Activated CD4-positive, alpha-beta memory T cell treated with anti-CD3 and anti-CD28 coated beads for 36 hours (primary cell): ENCODE measurements at regions of chr9 and their contacts with region 1.

Region 1: GRCh38 chr9:109935406-109936087 is 155.5 kb downstream of the PALM2AKAP2 start:
- DNase-seq: no peak
- H3K4me3 Mint-ChIP-seq: no peak overlapping the region
- H3K27ac Mint-ChIP-seq: peak overlapping the region; percentile 81
- H3K4me1 Mint-ChIP-seq: peaks cover 31% of the 10 kb centered on the region
- H3K27me3 Mint-ChIP-seq: peaks cover 5% of the 10 kb centered on the region

Region 2: DNA sequence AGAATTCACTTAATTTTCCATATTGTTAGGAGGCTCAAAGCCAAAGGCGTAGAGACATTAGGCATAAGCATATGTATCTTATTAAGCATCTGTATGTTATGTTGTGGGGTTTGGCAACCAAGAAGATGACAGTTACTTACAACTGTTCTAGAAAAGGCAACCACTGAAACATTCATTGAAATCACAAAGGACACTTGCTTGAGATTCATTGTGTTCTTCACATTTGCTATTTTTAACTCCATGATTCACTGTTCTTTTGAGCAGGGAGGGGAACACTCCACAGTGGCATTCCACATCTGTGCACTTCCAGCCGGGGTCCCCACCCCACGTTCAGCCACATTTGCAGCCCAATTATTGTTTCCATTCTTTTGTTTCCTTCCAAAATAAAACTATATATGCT is 48.5 kb before region 1 on chr9:
- CTCF ChIA-PET with region 1: no interaction called
- POLR2A ChIA-PET with region 1: interaction called, 3 read pairs
- intact Hi-C with region 1: loop called (anchors 2 kb)
- DNase-seq: no peak
- H3K4me3 Mint-ChIP-seq: no peak overlapping the region
- H3K27ac Mint-ChIP-seq: peak overlapping the region; percentile 84
- H3K4me1 Mint-ChIP-seq: peaks cover 50% of the 10 kb centered on the region
- H3K27me3 Mint-ChIP-seq: peaks cover 1% of the 10 kb centered on the region

Region 3: GRCh38 chr9:109918339-109919163 is 17.0 kb before region 1 on chr9:
- CTCF ChIA-PET with region 1: no interaction called
- POLR2A ChIA-PET with region 1: interaction called, 7 read pairs
- intact Hi-C with region 1: loop called (anchors 1 kb)
- DNase-seq: peak; percentile 75
- H3K4me3 Mint-ChIP-seq: peak overlapping the region; percentile 58
- H3K27ac Mint-ChIP-seq: peak overlapping the region; percentile 97
- H3K4me1 Mint-ChIP-seq: peaks cover 29% of the 10 kb centered on the region
- H3K27me3 Mint-ChIP-seq: peaks cover 1% of the 10 kb centered on the region

Region 4: DNA sequence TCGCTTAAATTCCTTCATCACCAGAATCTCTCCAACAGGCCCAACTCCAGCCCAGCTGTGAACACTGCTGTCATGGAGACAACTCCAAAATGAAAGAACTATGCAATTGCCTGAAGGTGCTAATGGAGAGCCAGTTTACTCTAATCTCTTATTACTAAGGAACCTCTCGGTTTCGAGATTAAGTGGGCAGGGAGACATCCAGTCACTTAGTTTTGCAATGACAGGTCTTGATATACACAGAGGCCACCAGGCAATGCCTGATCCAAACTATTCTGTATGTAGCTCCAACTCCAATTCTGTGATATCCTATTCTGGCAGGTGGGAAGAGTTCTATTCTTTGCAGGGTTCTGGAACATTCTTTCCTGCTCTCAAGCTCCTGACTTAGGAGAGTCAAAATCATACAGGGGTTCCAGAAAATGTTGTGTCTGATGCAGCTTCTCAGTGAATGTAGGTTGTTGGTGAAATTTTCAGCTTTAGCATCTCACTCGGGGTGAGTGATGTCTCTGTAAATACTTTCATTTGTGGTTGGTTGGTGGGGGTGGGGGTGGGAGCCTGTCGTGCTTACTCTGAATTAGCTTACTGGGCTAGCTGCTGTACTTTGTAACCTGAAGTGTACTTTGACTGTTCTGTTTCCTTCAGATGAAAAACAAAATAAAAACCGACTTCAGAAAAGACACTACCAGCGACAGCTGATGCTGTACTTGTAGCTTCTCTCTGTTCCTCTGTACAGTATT is 15.3 kb after region 1 on chr9:
- CTCF ChIA-PET with region 1: interaction called, 5 read pairs
- POLR2A ChIA-PET with region 1: interaction called, 25 read pairs
- intact Hi-C with region 1: loop called (anchors 1 kb)
- DNase-seq: peak; percentile 64
- H3K4me3 Mint-ChIP-seq: peak overlapping the region; percentile 23
- H3K27ac Mint-ChIP-seq: peak overlapping the region; percentile 82
- H3K4me1 Mint-ChIP-seq: peaks cover 30% of the 10 kb centered on the region
- H3K27me3 Mint-ChIP-seq: no peaks in the 10 kb centered on the region

Region 5: GRCh38 chr9:110048403-110048975 is 112.9 kb after region 1 on chr9:
- CTCF ChIA-PET with region 1: no interaction called
- POLR2A ChIA-PET with region 1: no interaction called
- intact Hi-C with region 1: loop called (anchors 1 kb)
- DNase-seq: peak; percentile 89
- H3K4me3 Mint-ChIP-seq: peak overlapping the region; percentile 90
- H3K27ac Mint-ChIP-seq: peak overlapping the region; percentile 72
- H3K4me1 Mint-ChIP-seq: peaks cover 39% of the 10 kb centered on the region
- H3K27me3 Mint-ChIP-seq: peaks cover 13% of the 10 kb centered on the region